Heart right ventricle (tissue), 16 donors: ENCODE measurements at regions of chr2 and their contacts with region 1.

Region 1: DNA sequence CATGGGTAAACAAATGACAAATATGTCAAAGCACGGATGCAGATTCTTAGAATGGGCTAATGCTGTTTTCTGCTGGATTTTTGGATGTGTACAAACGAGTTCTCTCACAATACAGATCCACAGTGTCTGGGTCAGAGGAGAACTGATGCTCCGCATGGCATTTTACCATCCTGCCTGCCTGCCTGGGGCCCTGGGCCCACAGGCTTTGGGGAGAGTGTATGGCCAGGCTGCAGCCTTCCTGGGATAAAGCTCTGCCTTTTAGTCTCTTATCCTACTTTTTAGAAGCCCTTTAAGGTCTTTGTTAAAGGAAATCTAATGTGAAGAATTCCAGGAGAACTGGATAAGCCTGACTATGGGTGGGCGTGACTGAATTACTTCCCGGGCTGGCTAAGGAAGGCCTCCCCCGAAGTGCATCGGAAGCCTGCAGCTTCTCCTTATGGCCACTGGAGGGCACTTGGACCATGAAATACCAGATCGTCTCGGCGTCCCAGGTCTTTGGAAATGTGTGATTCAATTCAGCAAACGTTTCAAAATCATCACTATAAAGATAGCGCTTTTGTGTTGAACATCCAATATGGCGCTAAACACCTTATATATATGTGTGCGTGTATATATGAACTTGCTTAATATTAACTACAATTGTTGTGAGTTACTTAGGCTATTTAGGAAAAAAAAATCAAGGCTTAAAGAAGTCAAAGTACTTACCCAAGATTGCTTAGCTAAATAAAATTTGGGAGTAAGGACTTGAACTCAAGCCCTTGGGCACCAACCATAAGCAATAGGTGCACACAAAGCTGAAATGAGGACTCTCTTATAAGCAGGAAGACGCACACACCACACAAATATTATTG is 15.2 kb upstream of the DNPEP start:
- DNase-seq: peak in 1 of 2 donors; percentile 75
- ATAC-seq: peak in 6 of 8 donors; percentile 7 to 31 (median 19)
- H3K4me3 ChIP-seq: no peak overlapping the region
- H3K27ac ChIP-seq: peak overlapping the region in 8 of 10 donors; percentile 83 to 96 (median 92)
- H3K4me1 ChIP-seq: peaks cover 0 to 50% (median 19%) of the 10 kb centered on the region in 9 donors
- H3K27me3 ChIP-seq: no peaks in the 10 kb centered on the region
- CTCF ChIP-seq: peak; percentile 83 to 94 (median 90)

Region 2: DNA sequence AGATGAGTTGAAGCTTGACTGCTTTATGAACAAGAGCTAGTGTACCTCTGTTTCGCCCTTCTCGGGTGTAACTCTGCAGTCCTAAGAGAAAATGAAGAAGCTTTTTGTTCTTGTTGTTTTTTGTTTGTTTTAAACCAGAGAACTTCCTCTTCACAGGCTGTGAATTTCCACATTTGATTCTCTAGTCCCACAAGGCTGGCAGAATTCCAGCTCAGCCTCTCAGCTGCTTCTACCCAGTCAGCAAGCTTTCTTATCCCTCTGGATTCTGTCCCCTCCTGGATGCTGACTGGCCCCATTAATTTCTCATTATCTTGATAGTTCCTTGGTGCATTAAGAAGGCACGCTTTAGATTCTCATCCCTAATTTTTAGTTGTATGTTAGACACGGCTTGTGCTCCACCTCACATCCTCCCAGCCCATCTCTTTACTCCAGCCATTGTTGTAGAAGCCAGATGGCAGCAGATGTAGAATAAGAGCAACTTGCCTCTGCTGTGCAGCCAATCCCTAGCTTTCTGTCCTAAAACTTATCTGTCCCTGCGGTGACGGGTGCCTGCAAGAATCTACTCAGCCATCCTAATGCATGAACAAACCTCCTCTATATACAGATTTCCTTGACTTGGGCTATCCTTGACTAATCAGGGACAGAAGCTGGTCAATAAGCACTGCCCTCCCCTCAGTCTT is 58.0 kb before region 1 on chr2:
- intact Hi-C with region 1: no loop called
- DNase-seq: peak; percentile 21 to 38
- ATAC-seq: peak in 4 of 8 donors; percentile 21 to 49 (median 34)
- H3K4me3 ChIP-seq: no peak overlapping the region
- H3K27ac ChIP-seq: peak overlapping the region in 1 of 10 donors; percentile 41
- H3K4me1 ChIP-seq: peaks cover 0 to 16% (median 0%) of the 10 kb centered on the region in 9 donors
- H3K27me3 ChIP-seq: peaks cover 0 to 28% (median 11%) of the 10 kb centered on the region in 7 donors
- CTCF ChIP-seq: peak in 1 of 9 donors; percentile 6

Region 3: DNA sequence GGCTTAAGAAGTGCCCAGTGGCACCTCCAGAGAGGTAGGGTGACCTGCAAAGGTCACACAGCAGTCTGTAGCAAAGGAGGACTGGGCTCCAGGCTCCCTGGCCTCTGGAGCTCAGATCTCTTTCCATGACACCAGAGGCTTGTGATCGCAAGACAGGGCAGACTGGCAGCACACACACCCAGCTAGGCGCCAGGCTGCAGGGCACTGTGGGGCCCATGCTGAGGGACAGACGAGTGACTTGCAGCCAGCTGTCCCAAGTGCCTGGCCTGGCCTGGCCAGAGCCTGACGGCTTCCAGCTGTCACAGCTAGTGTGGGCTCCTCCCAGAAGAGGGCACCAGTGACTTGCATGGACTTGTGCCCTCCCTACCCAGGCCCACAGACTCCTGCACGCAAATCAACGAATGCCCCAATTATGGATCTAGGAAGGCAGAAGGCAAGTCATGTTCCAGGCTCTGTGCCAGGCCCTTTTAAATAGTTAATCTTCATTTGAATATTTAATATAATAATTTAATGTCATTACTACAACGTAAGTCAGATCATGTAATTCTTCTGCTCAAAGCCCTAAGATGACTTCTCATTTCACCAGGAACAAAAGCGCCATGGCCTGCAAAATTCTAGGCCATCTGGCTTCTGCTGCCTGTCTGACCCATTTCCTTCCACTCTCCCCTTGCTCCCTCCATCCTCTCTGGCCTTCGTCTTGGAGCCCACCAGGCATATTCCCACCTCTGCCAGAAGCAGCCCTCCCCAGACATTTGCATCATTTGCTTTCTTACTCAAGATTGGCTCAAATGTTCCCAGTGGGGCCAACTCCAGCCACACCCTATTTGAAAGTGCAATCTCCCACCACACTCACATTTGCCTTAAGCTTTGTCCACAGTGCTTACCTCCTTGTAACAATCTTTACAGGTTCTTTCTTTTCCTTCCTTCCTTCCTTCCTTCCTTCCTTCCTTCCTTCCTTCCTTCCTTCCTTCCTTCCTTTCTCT is 28.0 kb after region 1 on chr2:
- intact Hi-C with region 1: loop called in 5 of 10 experiments (anchors 1 to 2 kb)
- DNase-seq: peak; percentile 52 to 67
- ATAC-seq: peak; percentile 60 to 78 (median 70)
- H3K4me3 ChIP-seq: no peak overlapping the region
- H3K27ac ChIP-seq: peak overlapping the region in 9 of 10 donors; percentile 24 to 84 (median 75)
- H3K4me1 ChIP-seq: peaks cover 0 to 33% (median 6%) of the 10 kb centered on the region in 9 donors
- H3K27me3 ChIP-seq: peaks cover 0 to 33% (median 21%) of the 10 kb centered on the region in 7 donors
- CTCF ChIP-seq: peak in 6 of 9 donors; percentile 19 to 51 (median 41)

Region 4: GRCh38 chr2:219459460-219460311 is 56.8 kb after region 1 on chr2:
- intact Hi-C with region 1: loop called in 2 of 10 experiments (anchors 5 to 10 kb)
- DNase-seq: peak; percentile 66 to 68
- ATAC-seq: peak; percentile 57 to 81 (median 70)
- H3K4me3 ChIP-seq: no peak overlapping the region
- H3K27ac ChIP-seq: peak overlapping the region; percentile 67 to 96 (median 90)
- H3K4me1 ChIP-seq: peaks cover 3 to 63% (median 11%) of the 10 kb centered on the region in 9 donors
- H3K27me3 ChIP-seq: peaks cover 0 to 5% (median 0%) of the 10 kb centered on the region in 7 donors
- CTCF ChIP-seq: peak; percentile 75 to 92 (median 87)

Region 5: GRCh38 chr2:219475697-219476651 is 73.1 kb after region 1 on chr2:
- intact Hi-C with region 1: no loop called
- DNase-seq: peak; percentile 66 to 77
- ATAC-seq: peak in 7 of 8 donors; percentile 41 to 81 (median 70)
- H3K4me3 ChIP-seq: no peak overlapping the region
- H3K27ac ChIP-seq: peak overlapping the region in 6 of 10 donors; percentile 49 to 78 (median 57)
- H3K4me1 ChIP-seq: peaks cover 0 to 41% (median 6%) of the 10 kb centered on the region in 9 donors
- H3K27me3 ChIP-seq: no peaks in the 10 kb centered on the region
- CTCF ChIP-seq: peak; percentile 64 to 93 (median 84)

Region 6: GRCh38 chr2:219490186-219490585 is 87.3 kb after region 1 on chr2:
- intact Hi-C with region 1: no loop called
- DNase-seq: no peak
- ATAC-seq: peak in 1 of 8 donors; percentile 12
- H3K4me3 ChIP-seq: no peak overlapping the region
- H3K27ac ChIP-seq: peak overlapping the region in 3 of 10 donors; percentile 29 to 51 (median 30)
- H3K4me1 ChIP-seq: peaks cover 0 to 43% (median 3%) of the 10 kb centered on the region in 9 donors
- H3K27me3 ChIP-seq: peaks cover 0 to 57% (median 33%) of the 10 kb centered on the region in 7 donors
- CTCF ChIP-seq: peak in 2 of 9 donors; percentile 4 to 13

Region 7: DNA sequence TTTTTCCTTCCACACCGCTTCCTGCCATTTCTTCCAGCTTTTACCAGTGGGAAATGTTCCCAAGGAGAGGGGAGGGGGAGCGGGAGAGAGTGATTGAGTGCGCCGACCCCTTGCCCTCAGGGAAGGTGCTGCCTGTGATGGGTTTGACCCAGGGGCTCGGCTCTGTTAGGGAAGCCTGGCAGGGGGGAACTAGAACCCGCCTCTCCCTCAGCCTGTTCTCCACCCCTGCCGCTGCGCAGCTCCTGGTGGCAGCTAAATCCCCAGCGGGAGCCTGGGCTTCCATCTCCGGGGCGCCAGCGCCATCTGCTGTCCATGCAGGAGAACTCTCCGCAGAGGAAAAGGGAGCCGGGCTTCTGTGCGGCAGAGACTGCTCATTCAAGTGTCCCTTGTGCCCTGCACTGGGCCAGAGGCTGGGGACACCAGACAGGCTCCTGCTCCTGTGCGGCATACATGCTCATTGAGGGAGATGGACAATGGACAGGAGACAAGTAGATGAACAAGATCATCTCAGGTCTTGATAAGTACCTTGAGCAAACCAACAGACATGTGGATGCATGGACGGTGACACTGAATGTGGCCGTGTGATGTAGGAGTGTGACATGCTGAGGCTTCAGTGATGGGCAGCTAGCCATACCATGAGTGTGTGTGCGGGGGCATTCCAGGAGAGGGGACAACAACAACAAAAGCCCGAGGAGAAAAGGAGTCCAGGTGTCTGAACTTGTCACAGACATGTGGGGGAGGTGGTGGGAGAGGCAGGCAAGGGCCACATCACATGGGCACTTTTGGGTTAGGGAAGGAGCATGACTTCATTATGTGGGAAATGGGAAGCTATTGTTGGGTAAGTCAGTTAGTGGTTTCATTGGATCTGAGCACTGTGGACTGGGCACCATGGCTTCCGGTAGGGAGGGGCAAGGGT is 127.4 kb after region 1 on chr2:
- intact Hi-C with region 1: loop called (anchors 1 to 5 kb)
- DNase-seq: peak; percentile 83 to 92
- ATAC-seq: peak; percentile 64 to 93 (median 86)
- H3K4me3 ChIP-seq: peak overlapping the region in 3 of 10 donors; percentile 11 to 21 (median 15)
- H3K27ac ChIP-seq: no peak overlapping the region
- H3K4me1 ChIP-seq: peaks cover 5 to 34% (median 18%) of the 10 kb centered on the region in 9 donors
- H3K27me3 ChIP-seq: peaks cover 0 to 60% (median 56%) of the 10 kb centered on the region in 7 donors
- CTCF ChIP-seq: peak; percentile 94 to 98 (median 97)

Region 8: GRCh38 chr2:219642465-219643080 is 239.7 kb after region 1 on chr2:
- intact Hi-C with region 1: loop called in 3 of 10 experiments (anchors 5 to 10 kb)
- DNase-seq: peak; percentile 94 to 95
- ATAC-seq: peak; percentile 51 to 79 (median 65)
- H3K4me3 ChIP-seq: no peak overlapping the region
- H3K27ac ChIP-seq: peak overlapping the region in 9 of 10 donors; percentile 75 to 99 (median 88)
- H3K4me1 ChIP-seq: peaks cover 16 to 88% (median 47%) of the 10 kb centered on the region in 9 donors
- H3K27me3 ChIP-seq: no peaks in the 10 kb centered on the region
- CTCF ChIP-seq: peak; percentile 93 to 100 (median 98)

Region 9: DNA sequence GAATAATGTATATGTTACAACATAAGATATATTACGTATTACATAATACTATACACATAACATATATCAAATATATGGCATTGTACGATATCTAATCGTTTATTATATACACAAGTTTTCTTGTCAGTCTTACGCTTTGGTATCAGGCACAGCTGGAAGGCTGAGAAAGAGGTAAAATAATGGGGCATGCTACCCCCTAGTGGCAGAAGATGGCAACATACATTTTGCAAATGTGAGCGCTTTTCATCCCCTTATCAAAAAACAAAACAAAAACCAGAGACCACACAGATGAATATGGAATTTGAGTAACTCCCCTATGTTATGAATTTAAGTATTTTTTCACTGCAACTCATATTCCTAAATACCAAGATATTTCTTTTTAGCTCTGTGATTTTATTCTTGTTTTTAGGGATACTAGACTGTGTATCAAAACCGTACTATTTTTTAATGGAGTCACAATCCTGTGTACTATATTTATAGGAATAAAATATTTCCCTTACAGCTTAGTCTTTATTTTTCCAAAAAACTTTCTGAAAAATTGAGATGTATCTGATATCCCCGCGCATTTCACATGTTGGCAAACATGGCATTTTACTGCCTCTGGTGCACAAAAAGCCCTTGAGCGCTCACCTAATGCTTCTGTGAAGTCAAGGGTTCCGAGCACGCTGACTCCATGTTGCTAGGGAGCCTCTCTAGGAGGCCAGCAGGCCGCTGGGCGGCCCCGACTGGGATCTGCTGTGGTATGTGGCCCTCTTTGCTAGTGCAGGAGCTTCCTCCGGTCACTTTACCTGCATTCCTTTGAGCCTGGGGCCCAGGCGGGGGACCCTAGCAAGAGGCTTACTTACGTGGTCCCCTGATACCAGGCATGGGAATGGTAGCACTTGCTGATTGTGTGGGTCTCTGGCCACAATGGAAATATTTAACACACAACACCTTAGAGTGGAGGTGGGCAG is 287.1 kb after region 1 on chr2:
- intact Hi-C with region 1: no loop called
- DNase-seq: peak in 1 of 2 donors; percentile 44
- ATAC-seq: peak; percentile 17 to 72 (median 59)
- H3K4me3 ChIP-seq: no peak overlapping the region
- H3K27ac ChIP-seq: peak overlapping the region in 6 of 10 donors; percentile 62 to 75 (median 68)
- H3K4me1 ChIP-seq: peaks cover 0 to 17% (median 8%) of the 10 kb centered on the region in 9 donors
- H3K27me3 ChIP-seq: peaks cover 0 to 16% (median 4%) of the 10 kb centered on the region in 7 donors
- CTCF ChIP-seq: peak; percentile 69 to 81 (median 79)